ENCODE measurements at regions of chr21 and their contacts with region 1.

Region 1: GRCh38 chr21:43866260-43866629 is 1.2 kb downstream of the AGPAT3 start:
- DNase-seq: peak; percentile 76
- H3K4me3 ChIP-seq: peak overlapping the region; percentile 88
- H3K27ac ChIP-seq: peak overlapping the region; percentile 59
- H3K4me1 ChIP-seq: peaks cover 4% of the 10 kb centered on the region; the same call in 1 of the 2 replicates
- H3K27me3 ChIP-seq: peaks cover 4% of the 10 kb centered on the region; the same call in 1 of the 2 replicates

Region 2: GRCh38 chr21:43703035-43703880 is 163.0 kb before region 1 on chr21:
- in situ Hi-C with region 1: no loop called
- DNase-seq: peak; percentile 50
- H3K4me3 ChIP-seq: no peak overlapping the region; the same call in 1 of the 2 replicates
- H3K27ac ChIP-seq: no peak overlapping the region
- H3K4me1 ChIP-seq: 0 out of 2 replicates have a peak, but pooled peaks cover 9% of the 10 kb centered on the region
- H3K27me3 ChIP-seq: no peaks in the 10 kb centered on the region

Region 3: DNA sequence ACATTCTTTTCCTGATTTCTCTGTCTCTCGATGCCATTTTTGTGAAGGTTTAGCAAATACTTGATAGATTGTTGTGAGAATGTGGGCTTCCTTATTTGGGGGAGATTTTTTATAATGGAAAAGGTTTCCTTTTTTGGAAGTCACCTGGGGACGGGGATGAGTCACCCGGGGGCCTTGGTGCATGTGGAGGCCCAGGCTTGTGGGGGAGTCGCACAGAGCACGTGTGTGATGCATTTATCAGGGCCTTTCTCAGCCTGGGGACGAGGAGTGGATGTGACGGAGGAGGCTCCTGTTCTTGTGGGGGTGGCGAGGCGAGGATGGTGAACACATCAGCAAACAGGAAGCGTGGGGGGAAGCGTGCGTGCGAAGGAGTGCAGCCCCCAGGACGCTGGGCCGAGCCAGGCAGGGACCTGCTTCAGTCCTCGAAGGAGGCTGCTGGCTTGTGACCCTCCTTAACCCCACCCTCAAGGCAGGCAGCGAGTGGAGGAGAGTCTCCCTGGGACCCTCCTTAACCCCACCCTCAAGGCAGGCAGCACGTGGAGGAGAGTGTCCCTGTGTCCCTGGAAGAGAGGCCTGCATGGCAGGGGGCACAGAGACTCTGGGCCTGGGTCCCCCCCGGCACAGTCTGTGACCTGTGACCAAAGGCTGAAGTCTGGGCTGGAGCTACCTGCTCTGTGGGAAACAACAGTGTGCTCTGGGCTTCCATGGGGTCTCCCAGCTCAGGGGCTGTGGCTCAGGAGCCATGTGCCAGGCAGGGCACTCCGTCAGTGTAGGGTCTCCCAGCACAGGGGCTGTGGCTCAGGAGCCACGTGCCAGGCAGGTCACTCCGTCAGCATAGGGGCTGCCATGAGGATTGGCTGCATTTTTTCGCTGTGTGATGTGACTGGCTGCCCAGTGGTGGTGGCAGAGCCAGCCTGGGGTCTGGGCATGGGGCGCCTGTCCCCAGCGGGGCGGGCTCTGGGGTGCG is 56.0 kb after region 1 on chr21:
- in situ Hi-C with region 1: loop called (anchors 10 kb)
- DNase-seq: no peak
- H3K4me3 ChIP-seq: no peak overlapping the region
- H3K27ac ChIP-seq: no peak overlapping the region
- H3K4me1 ChIP-seq: no peaks in the 10 kb centered on the region
- H3K27me3 ChIP-seq: no peaks in the 10 kb centered on the region